Colonic mucosa (tissue), 4 donors: ENCODE measurements at regions of chr1 and their contacts with region 1.

Region 1: DNA sequence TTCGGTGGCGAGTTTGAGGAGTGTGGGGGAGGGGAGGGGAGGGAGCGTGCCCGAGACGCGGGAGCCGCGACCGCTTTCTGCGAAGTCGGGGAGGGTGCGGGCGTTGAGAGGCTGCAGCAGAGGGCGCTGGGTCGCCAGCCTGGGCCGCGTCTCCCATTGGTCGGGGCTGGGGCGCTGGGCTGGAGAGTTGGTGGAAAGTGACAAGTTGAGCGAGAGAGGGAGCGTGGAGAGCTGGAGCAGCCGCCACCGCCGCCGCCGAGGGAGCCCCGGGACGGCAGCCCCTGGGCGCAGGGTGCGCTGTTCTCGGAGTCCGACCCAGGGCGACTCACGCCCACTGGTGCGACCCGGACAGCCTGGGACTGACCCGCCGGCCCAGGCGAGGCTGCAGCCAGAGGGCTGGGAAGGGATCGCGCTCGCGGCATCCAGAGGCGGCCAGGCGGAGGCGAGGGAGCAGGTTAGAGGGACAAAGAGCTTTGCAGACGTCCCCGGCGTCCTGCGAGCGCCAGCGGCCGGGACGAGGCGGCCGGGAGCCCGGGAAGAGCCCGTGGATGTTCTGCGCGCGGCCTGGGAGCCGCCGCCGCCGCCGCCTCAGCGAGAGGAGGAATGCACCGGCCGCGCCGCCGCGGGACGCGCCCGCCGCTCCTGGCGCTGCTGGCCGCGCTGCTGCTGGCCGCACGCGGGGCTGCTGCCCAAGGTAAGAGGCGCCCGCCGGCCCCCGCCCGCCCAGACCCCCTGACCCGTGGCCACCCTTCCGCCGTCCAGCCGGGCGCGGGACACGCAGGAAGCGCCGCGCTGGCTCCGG is at the start of gene ROR1:
- DNase-seq: peak; percentile 92
- H3K4me3 ChIP-seq: peak within 1 kb of the TSS; percentile 70
- H3K27ac ChIP-seq: peak within 1 kb of the TSS; percentile 67
- H3K4me1 ChIP-seq: no peaks in the 10 kb centered on the region
- H3K27me3 ChIP-seq: no peaks in the 10 kb centered on the region
- CTCF ChIP-seq: peak; percentile 44
- total RNA-seq, gene ROR1: 5.1 to 6.8 TPM

Region 2: GRCh38 chr1:63892632-63893395 is 118.8 kb after region 1 on chr1:
- intact Hi-C with region 1: no loop called
- DNase-seq: no peak
- H3K4me3 ChIP-seq: no peak overlapping the region
- H3K27ac ChIP-seq: peak overlapping the region; percentile 5
- H3K4me1 ChIP-seq: no peaks in the 10 kb centered on the region
- H3K27me3 ChIP-seq: no peaks in the 10 kb centered on the region
- CTCF ChIP-seq: no peak

Region 3: GRCh38 chr1:63917571-63918417 is 143.8 kb after region 1 on chr1:
- intact Hi-C with region 1: loop called (anchors 10 kb)
- DNase-seq: no peak
- H3K4me3 ChIP-seq: no peak overlapping the region
- H3K27ac ChIP-seq: no peak overlapping the region
- H3K4me1 ChIP-seq: no peaks in the 10 kb centered on the region
- H3K27me3 ChIP-seq: no peaks in the 10 kb centered on the region
- CTCF ChIP-seq: no peak

Region 4: GRCh38 chr1:64184003-64184440 is 410.0 kb after region 1 on chr1:
- intact Hi-C with region 1: no loop called
- DNase-seq: no peak
- H3K4me3 ChIP-seq: no peak overlapping the region
- H3K27ac ChIP-seq: no peak overlapping the region
- H3K4me1 ChIP-seq: no peaks in the 10 kb centered on the region
- H3K27me3 ChIP-seq: no peaks in the 10 kb centered on the region
- CTCF ChIP-seq: no peak